Sciatic nerve (tissue), 2 donors: ENCODE measurements at regions of chr2 and their contacts with region 1.

Region 1: DNA sequence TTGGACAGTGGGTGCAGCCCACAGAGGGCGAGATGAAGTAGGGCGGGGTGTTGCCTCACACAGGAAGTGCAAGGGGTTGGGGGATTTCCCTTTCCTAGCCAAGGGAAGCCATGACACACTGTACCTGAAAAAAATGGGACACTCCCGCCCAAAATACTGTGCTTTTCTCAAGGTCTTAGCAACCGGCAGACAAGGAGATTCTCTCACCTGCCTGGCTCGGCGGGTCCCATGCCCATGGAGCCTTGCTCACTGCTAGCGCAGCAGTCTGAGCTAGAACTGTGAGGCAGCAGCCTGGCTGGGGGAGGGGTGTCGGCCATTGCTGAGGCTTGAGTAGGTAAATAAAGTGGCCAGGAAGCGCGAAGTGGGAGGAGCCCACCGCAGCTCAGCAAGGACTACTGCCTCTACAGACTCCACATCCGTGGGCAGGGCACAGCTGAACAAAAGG is 244.7 kb downstream of the NBAS start:
- DNase-seq: no peak
- ATAC-seq: no peak

Region 2: GRCh38 chr2:14616342-14616741 is 700.0 kb before region 1 on chr2:
- intact Hi-C with region 1: loop called (anchors 5 kb)
- DNase-seq: no peak
- ATAC-seq: peak; percentile 42

Region 3: GRCh38 chr2:15298770-15299169 is 17.6 kb before region 1 on chr2:
- intact Hi-C with region 1: no loop called
- DNase-seq: no peak
- ATAC-seq: no peak